ENCODE measurements at regions of chr3 and their contacts with region 1.

Region 1: GRCh38 chr3:184250167-184250828 is 826 bp downstream of the EEF1AKMT4 start:
- DNase-seq: peak; percentile 94
- H3K4me3 Mint-ChIP-seq: peak overlapping the region; percentile 90
- H3K27ac Mint-ChIP-seq: peak overlapping the region; percentile 69
- H3K4me1 Mint-ChIP-seq: peaks cover 8% of the 10 kb centered on the region
- H3K27me3 Mint-ChIP-seq: no peaks in the 10 kb centered on the region

Region 2: GRCh38 chr3:183895296-183895695 is 355.0 kb before region 1 on chr3:
- CTCF ChIA-PET with region 1: interaction called, 11 read pairs
- POLR2A ChIA-PET with region 1: no interaction called
- intact Hi-C with region 1: loop called (anchors 2 kb)
- DNase-seq: peak; percentile 41
- H3K4me3 Mint-ChIP-seq: no peak overlapping the region
- H3K27ac Mint-ChIP-seq: no peak overlapping the region
- H3K4me1 Mint-ChIP-seq: no peaks in the 10 kb centered on the region
- H3K27me3 Mint-ChIP-seq: peaks cover 15% of the 10 kb centered on the region

Region 3: GRCh38 chr3:184135149-184135910 is 115.0 kb before region 1 on chr3 and contains the start of gene EIF2B5:
- CTCF ChIA-PET with region 1: no interaction called
- POLR2A ChIA-PET with region 1: interaction called, 4 read pairs
- intact Hi-C with region 1: loop called (anchors 1 kb)
- DNase-seq: peak; percentile 94
- H3K4me3 Mint-ChIP-seq: peak within 1 kb of the TSS; percentile 96
- H3K27ac Mint-ChIP-seq: peak within 1 kb of the TSS; percentile 91
- H3K4me1 Mint-ChIP-seq: peaks cover 35% of the 10 kb centered on the region
- H3K27me3 Mint-ChIP-seq: no peaks in the 10 kb centered on the region
- total RNA-seq, gene EIF2B5: 49.6 to 51.5 TPM

Region 4: DNA sequence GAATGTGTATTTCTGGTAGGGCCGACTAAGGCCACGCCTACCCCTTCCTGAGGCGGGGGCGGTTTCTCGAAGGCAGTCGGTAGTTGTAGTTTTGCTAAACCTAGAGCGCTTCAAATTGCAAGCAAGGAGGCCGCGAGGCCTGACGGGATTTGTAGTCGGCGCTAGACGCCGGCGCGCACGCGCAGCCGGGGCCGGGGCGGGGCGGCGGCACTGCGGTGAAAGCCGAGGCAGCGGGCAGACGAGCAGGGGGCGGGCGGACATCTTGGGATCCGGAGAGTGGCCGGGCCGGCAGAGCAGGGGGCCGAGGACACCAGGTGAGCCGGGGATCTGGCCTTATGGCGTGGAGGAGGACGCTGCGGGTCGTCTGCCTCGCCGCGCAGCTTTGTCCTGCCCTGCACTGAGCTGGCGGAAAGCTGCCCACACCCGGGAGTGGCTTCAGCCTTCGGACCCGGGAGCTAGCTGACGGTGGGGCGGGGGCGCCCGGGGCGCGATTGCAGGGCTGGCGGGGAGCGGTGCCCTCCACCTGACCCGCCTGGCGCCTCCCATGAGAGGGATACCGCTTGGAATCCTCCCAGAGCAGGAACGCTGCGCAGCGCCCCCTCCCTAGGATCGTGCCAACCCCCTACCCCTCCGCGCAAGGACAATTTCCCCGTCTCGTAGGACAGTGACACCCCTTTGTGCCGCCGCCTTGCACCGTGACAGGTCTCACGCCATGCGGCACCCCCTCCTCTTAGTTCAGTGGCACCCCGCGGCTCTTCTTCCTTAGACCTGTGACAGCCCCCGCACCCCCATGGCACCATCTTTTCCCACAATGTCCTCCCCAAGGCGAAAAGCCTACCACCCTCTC is 75.4 kb before region 1 on chr3 and contains the start of gene AP2M1:
- CTCF ChIA-PET with region 1: interaction called, 4 read pairs
- POLR2A ChIA-PET with region 1: interaction called, 4 read pairs
- intact Hi-C with region 1: loop called (anchors 1 kb)
- DNase-seq: peak; percentile 99
- H3K4me3 Mint-ChIP-seq: peak within 1 kb of the TSS; percentile 98
- H3K27ac Mint-ChIP-seq: peak within 1 kb of the TSS; percentile 67
- H3K4me1 Mint-ChIP-seq: peaks cover 25% of the 10 kb centered on the region
- H3K27me3 Mint-ChIP-seq: no peaks in the 10 kb centered on the region
- total RNA-seq, gene AP2M1: 218 to 221 TPM

Region 5: GRCh38 chr3:184229394-184230080 is 20.8 kb before region 1 on chr3 and contains the start of gene VWA5B2:
- CTCF ChIA-PET with region 1: interaction called, 94 read pairs
- POLR2A ChIA-PET with region 1: interaction called, 5 read pairs
- intact Hi-C with region 1: loop called (anchors 1 kb)
- DNase-seq: peak; percentile 73
- H3K4me3 Mint-ChIP-seq: peak within 1 kb of the TSS; percentile 49
- H3K27ac Mint-ChIP-seq: no peak within 1 kb of the TSS
- H3K4me1 Mint-ChIP-seq: peaks cover 9% of the 10 kb centered on the region
- H3K27me3 Mint-ChIP-seq: peaks cover 45% of the 10 kb centered on the region
- total RNA-seq, gene VWA5B2: not detected

Region 6: GRCh38 chr3:184289426-184289938 is 39.2 kb after region 1 on chr3:
- CTCF ChIA-PET with region 1: interaction called, 7 read pairs
- POLR2A ChIA-PET with region 1: no interaction called
- intact Hi-C with region 1: loop called (anchors 2 kb)
- DNase-seq: peak; percentile 81
- H3K4me3 Mint-ChIP-seq: no peak overlapping the region
- H3K27ac Mint-ChIP-seq: no peak overlapping the region
- H3K4me1 Mint-ChIP-seq: peaks cover 2% of the 10 kb centered on the region
- H3K27me3 Mint-ChIP-seq: peaks cover 5% of the 10 kb centered on the region

Region 7: GRCh38 chr3:184362668-184363540 is 112.6 kb after region 1 on chr3:
- CTCF ChIA-PET with region 1: no interaction called
- POLR2A ChIA-PET with region 1: no interaction called
- intact Hi-C with region 1: loop called (anchors 1 kb)
- DNase-seq: peak; percentile 98
- H3K4me3 Mint-ChIP-seq: peak overlapping the region; percentile 96
- H3K27ac Mint-ChIP-seq: peak overlapping the region; percentile 94
- H3K4me1 Mint-ChIP-seq: peaks cover 30% of the 10 kb centered on the region
- H3K27me3 Mint-ChIP-seq: no peaks in the 10 kb centered on the region

Region 8: DNA sequence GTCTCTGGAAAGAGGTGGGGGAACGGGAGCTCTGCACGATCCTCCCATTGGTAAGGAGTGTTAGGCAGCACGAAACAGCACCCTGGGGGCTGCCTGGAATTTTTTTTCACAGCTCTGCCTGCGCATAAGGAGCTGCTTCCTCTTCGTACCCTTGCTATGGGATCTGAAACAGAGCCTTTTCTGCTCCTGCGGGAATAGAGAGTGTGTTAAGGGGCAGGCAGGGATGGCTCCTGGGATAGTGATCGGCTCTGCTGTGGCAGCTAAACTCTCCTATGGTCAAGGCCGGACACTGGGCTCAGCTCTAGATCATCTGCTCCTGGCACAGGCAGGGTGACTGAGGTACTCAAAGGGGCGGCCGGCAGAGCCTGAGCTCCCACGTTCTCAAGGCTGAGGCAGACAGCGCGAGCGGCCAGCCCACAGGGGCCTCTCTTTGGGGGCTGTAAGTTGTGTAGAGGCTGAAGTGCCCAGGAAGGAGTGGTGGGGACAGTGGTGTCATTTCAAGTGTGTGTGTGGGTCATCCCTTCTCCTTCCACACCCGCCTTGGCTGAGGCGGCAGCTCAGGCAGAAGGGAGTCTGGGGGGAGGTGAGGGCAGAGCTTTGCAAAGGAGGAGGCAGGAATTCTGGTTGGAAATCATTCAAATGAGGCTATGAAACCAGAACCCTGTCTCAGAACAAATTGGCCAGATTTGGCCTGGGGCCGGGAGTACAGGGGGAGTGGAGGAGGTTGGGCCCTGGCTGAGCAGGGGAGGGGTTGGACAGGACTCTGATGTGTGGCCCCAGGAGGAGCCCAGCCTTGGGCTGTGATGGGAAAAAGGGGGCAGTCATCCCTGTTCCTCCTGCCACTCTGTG is 342.3 kb after region 1 on chr3:
- CTCF ChIA-PET with region 1: no interaction called
- POLR2A ChIA-PET with region 1: no interaction called
- intact Hi-C with region 1: no loop called
- DNase-seq: no peak
- H3K4me3 Mint-ChIP-seq: no peak overlapping the region
- H3K27ac Mint-ChIP-seq: no peak overlapping the region
- H3K4me1 Mint-ChIP-seq: no peaks in the 10 kb centered on the region
- H3K27me3 Mint-ChIP-seq: no peaks in the 10 kb centered on the region